ENCODE measurements at regions of chrX and their contacts with region 1.

Region 1: GRCh38 chrX:12988797-12989196 is 13.9 kb downstream of the TMSB4X start:
- DNase-seq: peak; percentile 70 to 71
- H3K4me3 ChIP-seq: no peak overlapping the region
- H3K4me3 Mint-ChIP-seq: peak overlapping the region; percentile 57
- H3K27ac Mint-ChIP-seq: peak overlapping the region; percentile 47
- H3K4me1 ChIP-seq: peaks cover 27% of the 10 kb centered on the region
- H3K4me1 Mint-ChIP-seq: peaks cover 13% of the 10 kb centered on the region
- H3K27me3 ChIP-seq: no peaks in the 10 kb centered on the region
- H3K27me3 Mint-ChIP-seq: no peaks in the 10 kb centered on the region
- CTCF ChIP-seq: no peak

Region 2: GRCh38 chrX:12791257-12792228 is 197.3 kb before region 1 on chrX and contains the start of gene PRPS2:
- CTCF ChIA-PET with region 1: no interaction called
- POLR2A ChIA-PET with region 1: no interaction called
- intact Hi-C with region 1: no loop called
- DNase-seq: peak; percentile 60 to 72
- H3K4me3 ChIP-seq: peak within 1 kb of the TSS; percentile 57
- H3K4me3 Mint-ChIP-seq: peak within 1 kb of the TSS; percentile 77
- H3K27ac Mint-ChIP-seq: peak within 1 kb of the TSS; percentile 50
- H3K4me1 ChIP-seq: no peaks in the 10 kb centered on the region
- H3K4me1 Mint-ChIP-seq: no peaks in the 10 kb centered on the region
- H3K27me3 ChIP-seq: no peaks in the 10 kb centered on the region
- H3K27me3 Mint-ChIP-seq: no peaks in the 10 kb centered on the region
- CTCF ChIP-seq: no peak
- total RNA-seq, gene PRPS2: 35.6 and 44.0 TPM in 2 replicates

Region 3: DNA sequence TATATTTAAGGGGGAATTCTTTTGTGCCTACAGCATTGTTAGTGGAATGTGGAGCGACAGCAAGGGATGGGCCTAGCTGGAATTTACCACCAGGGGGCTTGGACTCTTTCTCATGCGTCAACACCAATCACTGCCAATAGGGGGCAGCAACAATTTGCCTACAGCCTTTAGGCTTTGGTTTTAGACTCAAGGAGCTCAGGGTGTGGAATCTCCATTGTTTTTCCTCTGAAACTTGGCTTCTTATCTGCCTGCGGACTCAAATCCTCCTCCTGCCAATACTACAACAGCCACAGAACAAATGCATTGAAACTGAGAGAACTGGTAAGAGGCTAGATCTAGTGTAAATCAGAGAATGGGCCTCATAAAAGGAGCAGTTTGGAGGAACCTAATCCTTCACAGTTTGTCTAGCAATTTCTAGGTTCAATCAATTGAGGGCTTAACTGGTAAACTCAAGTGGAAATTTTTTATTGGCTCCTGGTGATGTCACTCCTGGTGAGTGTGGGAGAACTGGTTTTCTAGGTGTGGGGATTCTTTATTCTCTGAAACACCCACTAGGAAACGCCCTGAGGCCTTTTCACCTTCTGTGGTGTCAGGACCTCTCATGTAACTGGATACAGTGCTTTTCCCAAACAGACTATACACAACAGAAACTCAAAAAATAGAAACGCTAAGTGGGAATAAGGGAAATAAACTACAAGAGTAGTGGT is 41.8 kb before region 1 on chrX:
- CTCF ChIA-PET with region 1: no interaction called
- POLR2A ChIA-PET with region 1: no interaction called
- intact Hi-C with region 1: loop called (anchors 1 kb)
- DNase-seq: peak; percentile 77 to 81
- H3K4me3 ChIP-seq: no peak overlapping the region
- H3K4me3 Mint-ChIP-seq: no peak overlapping the region
- H3K27ac Mint-ChIP-seq: peak overlapping the region; percentile 81
- H3K4me1 ChIP-seq: peaks cover 24% of the 10 kb centered on the region
- H3K4me1 Mint-ChIP-seq: no peaks in the 10 kb centered on the region
- H3K27me3 ChIP-seq: no peaks in the 10 kb centered on the region
- H3K27me3 Mint-ChIP-seq: no peaks in the 10 kb centered on the region
- CTCF ChIP-seq: peak; percentile 83 to 86

Measured in Caco-2 (cell line).